ENCODE measurements at regions of chr7 and their contacts with region 1.

Region 1: GRCh38 chr7:22672846-22673652 is 54.0 kb upstream of the IL6 start:
- DNase-seq: no peak
- H3K4me3 ChIP-seq: no peak overlapping the region
- H3K27ac ChIP-seq: no peak overlapping the region
- H3K4me1 ChIP-seq: peaks cover 65% of the 10 kb centered on the region
- H3K27me3 ChIP-seq: no peaks in the 10 kb centered on the region
- CTCF ChIP-seq: no peak
- POLR2A ChIP-seq: no peak

Region 2: GRCh38 chr7:22697876-22698606 is 25.0 kb after region 1 on chr7:
- CTCF ChIA-PET with region 1: interaction called, 6 read pairs
- POLR2A ChIA-PET with region 1: interaction called, 5 read pairs
- dilution Hi-C with region 1: no loop called
- intact Hi-C with region 1: loop called (anchors 2 kb)
- DNase-seq: peak; percentile 63
- H3K4me3 ChIP-seq: no peak overlapping the region
- H3K27ac ChIP-seq: no peak overlapping the region
- H3K4me1 ChIP-seq: peaks cover 23% of the 10 kb centered on the region
- H3K27me3 ChIP-seq: no peaks in the 10 kb centered on the region
- CTCF ChIP-seq: no peak
- POLR2A ChIP-seq: no peak

Measured in endothelial cell of umbilical vein (primary cell).